Left ventricle myocardium inferior (tissue), 1 donor: ENCODE measurements at regions of chr3 and their contacts with region 1.

Region 1: DNA sequence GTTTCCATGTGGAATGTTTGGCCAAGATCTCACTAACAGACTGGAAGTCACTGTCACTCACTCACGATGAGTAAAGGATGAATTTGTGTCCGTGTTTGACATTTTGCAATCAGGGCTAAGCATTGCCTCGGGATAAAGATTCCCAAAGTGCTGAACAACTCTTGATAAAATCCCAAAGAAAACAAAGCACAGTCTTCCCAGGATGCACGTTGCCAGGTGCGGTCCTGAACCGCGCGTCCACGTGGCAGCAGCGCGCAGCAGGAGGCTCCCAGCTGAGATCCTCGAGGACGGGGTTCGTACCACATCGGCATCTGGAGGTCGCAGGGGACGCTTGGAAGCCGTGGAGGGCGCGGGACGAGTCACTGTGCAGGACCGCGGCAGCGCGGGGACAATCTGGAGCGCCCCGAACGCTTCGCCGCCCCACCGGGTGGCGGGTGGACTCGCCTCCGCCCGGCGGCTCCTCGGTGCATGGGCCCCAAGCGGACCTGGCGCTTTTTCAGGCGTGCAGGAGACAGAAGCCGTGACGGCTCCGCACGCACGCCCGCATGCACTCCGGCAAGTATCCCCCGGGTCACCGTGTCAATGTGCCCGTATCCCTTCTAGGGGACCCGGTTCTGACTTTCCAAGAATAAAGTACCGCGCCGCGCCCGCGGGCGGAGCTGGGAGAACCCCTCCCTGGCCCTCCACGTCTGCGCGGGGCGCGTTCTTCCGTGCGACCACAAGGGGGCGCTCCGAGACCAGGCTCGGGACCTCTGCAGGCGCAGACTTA is 17.7 kb downstream of the CPN2 start:
- DNase-seq: peak; percentile 87
- H3K4me3 ChIP-seq: peak overlapping the region; percentile 65
- H3K27ac ChIP-seq: no peak overlapping the region
- H3K4me1 ChIP-seq: peaks cover 32% of the 10 kb centered on the region
- H3K27me3 ChIP-seq: peaks cover 87% of the 10 kb centered on the region
- CTCF ChIP-seq: peak; percentile 99

Region 2: GRCh38 chr3:194189243-194189791 is 144.1 kb before region 1 on chr3:
- intact Hi-C with region 1: no loop called
- DNase-seq: no peak
- H3K4me3 ChIP-seq: no peak overlapping the region
- H3K27ac ChIP-seq: no peak overlapping the region
- H3K4me1 ChIP-seq: peaks cover 15% of the 10 kb centered on the region
- H3K27me3 ChIP-seq: no peaks in the 10 kb centered on the region
- CTCF ChIP-seq: no peak

Region 3: DNA sequence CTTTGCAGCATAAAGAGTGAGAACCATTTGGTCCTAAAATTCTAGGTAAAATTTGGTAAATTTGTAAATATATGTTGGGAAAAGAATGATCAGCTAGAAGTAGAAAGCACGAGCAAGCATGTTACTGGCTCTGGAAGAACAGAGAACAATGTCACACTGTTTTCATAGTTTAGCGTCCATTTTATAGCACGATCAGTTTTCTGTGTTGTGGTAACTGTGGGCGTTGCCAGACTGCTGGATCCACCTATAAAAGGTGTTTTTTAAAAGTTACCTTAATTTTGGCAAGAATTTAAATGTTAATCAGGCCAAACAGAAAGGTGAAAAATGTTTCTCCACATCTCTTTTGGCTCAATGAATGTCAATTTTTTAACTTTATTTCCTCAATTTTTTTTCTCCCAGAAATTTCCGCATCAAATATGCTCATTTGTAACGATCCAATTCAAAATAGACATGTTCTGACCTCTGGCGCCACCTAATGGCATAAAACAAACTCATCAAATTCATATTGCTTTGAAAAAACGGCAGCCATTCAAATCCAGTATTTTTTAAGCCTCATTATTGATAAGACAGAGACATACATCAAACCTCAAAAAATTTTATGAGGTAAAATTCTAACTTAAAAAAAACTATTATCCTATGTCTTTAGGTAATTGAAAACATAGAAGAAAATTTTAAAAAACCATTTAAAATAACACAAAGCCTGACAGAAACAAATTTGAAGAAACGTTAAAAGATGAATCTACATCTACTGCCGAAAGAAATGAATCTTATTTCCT is 71.2 kb after region 1 on chr3:
- intact Hi-C with region 1: loop called (anchors 10 kb)
- DNase-seq: no peak
- H3K4me3 ChIP-seq: no peak overlapping the region
- H3K27ac ChIP-seq: no peak overlapping the region
- H3K4me1 ChIP-seq: no peaks in the 10 kb centered on the region
- H3K27me3 ChIP-seq: peaks cover 8% of the 10 kb centered on the region
- CTCF ChIP-seq: peak; percentile 74